Dorsolateral prefrontal cortex (tissue), 120 donors: ENCODE measurements at regions of chr9 and their contacts with region 1.

Region 1: DNA sequence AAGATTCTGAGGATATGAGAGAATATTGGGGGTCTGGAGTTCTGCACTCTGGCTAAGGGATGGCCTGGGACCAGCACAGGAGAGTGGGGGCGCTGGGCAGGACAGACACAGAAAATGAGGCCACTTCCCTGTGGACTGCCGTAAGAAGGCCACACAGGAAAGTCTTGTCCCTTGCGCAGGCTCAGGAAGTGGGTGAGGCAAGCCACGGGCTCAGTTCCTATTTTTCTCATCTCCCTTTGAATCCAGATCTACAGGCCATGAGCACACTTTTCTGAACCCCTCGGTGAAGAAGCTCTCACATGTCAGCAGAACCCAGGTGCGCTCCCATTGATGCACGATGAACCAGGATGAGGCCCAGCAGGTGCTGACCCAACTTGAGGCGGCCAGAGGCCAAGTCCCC is 207.4 kb downstream of the AGTPBP1 start:
- DNase-seq: no peak
- H3K4me3 ChIP-seq: no peak overlapping the region
- H3K27ac ChIP-seq: peak overlapping the region in 1 of 59 donors; percentile 13
- H3K27me3 ChIP-seq: no peaks in the 10 kb centered on the region
- CTCF ChIP-seq: no peak

Region 2: GRCh38 chr9:84932915-84933527 is 601.3 kb before region 1 on chr9:
- intact Hi-C with region 1: no loop called
- DNase-seq: no peak
- H3K4me3 ChIP-seq: no peak overlapping the region
- H3K27ac ChIP-seq: peak overlapping the region in 33 of 59 donors; percentile 5 to 72 (median 38)
- H3K27me3 ChIP-seq: no peaks in the 10 kb centered on the region
- CTCF ChIP-seq: peak in 52 of 56 donors; percentile 9 to 67 (median 39)

Region 3: GRCh38 chr9:85349046-85349445 is 185.3 kb before region 1 on chr9:
- intact Hi-C with region 1: no loop called
- DNase-seq: peak in 1 of 10 donors; percentile 17
- H3K4me3 ChIP-seq: no peak overlapping the region
- H3K27ac ChIP-seq: no peak overlapping the region
- H3K27me3 ChIP-seq: no peaks in the 10 kb centered on the region
- CTCF ChIP-seq: no peak

Region 4: GRCh38 chr9:85600675-85601263 is 66.4 kb after region 1 on chr9:
- intact Hi-C with region 1: loop called (anchors 5 kb)
- DNase-seq: no peak
- H3K4me3 ChIP-seq: no peak overlapping the region
- H3K27ac ChIP-seq: peak overlapping the region in 32 of 59 donors; percentile 3 to 70 (median 21)
- H3K27me3 ChIP-seq: no peaks in the 10 kb centered on the region
- CTCF ChIP-seq: no peak

Region 5: DNA sequence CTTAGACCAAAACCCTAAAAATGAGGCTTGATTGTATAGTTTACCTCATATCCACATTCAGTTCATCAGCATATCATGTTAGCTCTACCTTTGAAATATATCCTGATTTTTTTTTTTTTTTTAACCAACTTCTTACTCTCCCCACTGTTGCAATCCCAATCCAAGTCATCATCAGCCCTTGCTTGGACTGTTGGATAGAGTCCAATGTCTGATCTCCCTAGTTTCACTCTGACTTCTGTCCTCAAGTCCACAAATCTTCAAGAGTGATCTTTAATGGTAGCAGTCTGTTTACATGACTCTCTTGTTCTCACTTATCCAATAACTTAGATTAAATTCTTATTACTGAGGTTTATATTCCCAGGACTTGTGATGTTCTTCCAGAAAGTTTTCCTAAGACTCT is 437.4 kb after region 1 on chr9:
- intact Hi-C with region 1: no loop called
- DNase-seq: no peak
- H3K4me3 ChIP-seq: no peak overlapping the region
- H3K27ac ChIP-seq: no peak overlapping the region
- H3K27me3 ChIP-seq: no peaks in the 10 kb centered on the region
- CTCF ChIP-seq: no peak